ENCODE measurements at regions of chr18 and their contacts with region 1.

Region 1: DNA sequence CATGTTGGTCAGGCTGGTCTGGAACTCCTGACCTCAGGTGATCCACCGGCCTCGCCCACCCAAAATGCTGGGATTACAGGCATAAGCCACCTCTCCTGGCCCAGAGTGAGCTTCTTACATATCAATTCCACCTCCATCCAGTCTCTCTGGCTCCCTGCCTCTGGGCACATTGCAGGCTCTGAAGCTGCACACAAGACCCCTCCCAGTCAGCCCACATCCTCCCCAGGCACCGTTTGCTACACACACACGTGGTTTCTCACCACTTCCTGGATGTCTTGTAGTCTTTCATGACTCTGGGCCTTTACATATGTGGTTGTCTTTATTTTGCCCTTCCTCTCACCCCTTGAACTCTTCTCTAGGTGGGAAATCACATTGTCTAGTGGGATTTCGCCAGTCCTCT is 64.0 kb upstream of the CABLES1 start:
- DNase-seq: peak; percentile 65 to 98 (median 80)
- ATAC-seq: peak; percentile 95
- H3K4me3 ChIP-seq: peak overlapping the region; percentile 27
- H3K4me3 Mint-ChIP-seq: peak overlapping the region; percentile 84
- H3K27ac ChIP-seq: peak overlapping the region; percentile 11 to 23
- H3K27ac Mint-ChIP-seq: peak overlapping the region; percentile 79
- H3K4me1 ChIP-seq: peaks cover 65% of the 10 kb centered on the region
- H3K4me1 Mint-ChIP-seq: peaks cover 82% of the 10 kb centered on the region
- H3K27me3 ChIP-seq: no peaks in the 10 kb centered on the region
- H3K27me3 Mint-ChIP-seq: no peaks in the 10 kb centered on the region
- CTCF ChIP-seq: no peak

Region 2: DNA sequence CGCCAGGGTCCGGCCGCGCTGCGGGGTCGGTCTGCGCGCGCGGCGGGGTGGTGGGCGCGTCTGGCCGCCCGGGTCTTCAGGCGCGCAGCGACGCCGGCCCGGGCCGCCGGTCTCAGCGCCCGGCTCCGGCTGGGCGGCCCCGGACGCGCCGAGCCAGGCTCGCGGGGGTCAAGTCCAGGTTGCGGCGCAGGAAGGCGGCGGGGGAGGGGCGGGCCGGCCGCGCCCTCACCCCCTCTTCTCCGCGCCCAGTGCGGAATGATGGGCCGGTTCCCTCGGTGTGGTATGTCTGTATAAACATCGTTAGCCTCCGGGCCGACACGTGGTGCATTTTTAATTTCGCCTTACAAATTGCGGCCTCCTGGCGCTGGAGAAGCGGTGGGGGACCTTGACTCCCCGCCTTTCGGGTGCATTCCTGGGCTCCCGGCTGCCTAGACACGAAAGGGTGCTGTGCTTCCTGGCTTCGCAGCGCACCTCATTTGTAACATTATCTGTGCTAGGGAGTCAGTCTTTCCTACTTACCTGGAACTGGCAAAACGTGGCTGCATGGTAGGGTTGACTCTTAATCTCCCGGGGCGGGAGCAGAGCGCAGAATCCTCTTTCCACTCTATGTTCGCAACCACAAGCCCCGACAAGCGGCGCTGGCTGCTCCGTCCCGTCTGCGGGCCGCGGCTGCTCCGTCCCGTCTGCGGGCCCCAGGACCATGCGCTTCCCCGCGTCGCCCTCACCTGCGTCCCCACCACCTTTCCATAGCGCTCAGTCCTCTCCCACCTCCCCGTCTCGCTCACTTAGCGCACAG is 722.6 kb before region 1 on chr18:
- CTCF ChIA-PET with region 1: no interaction called
- POLR2A ChIA-PET with region 1: no interaction called
- intact Hi-C with region 1: no loop called
- DNase-seq: peak in 1 of 14 experiments; percentile 20
- ATAC-seq: no peak
- H3K4me3 ChIP-seq: peak overlapping the region; percentile 60
- H3K4me3 Mint-ChIP-seq: peak overlapping the region; percentile 70
- H3K27ac ChIP-seq: peak overlapping the region in 1 of 2 donors; percentile 29
- H3K27ac Mint-ChIP-seq: peak overlapping the region; percentile 44
- H3K4me1 ChIP-seq: peaks cover 18% of the 10 kb centered on the region
- H3K4me1 Mint-ChIP-seq: peaks cover 12% of the 10 kb centered on the region
- H3K27me3 ChIP-seq: peaks cover 19 to 34% of the 10 kb centered on the region in 2 experiments
- H3K27me3 Mint-ChIP-seq: peaks cover 65% of the 10 kb centered on the region
- CTCF ChIP-seq: no peak

Region 3: DNA sequence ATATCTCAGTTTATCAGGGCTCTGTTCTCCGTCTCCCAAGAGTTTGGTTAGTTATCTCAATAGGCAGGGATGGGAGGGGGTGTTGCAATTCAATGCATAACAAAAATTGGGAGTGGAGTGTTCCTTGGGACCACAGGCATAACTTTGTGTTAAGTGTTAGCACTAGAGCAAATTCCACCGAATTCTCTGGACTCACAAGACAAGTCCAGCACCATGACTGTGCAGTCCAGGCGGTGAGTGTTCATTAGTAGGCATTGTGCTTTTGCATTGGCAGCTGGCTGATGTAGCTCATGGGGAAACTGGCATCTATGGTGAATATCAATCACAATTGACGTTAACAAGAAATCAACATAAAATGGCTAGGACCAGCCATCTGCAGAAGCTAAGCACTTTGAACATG is 15.0 kb before region 1 on chr18:
- CTCF ChIA-PET with region 1: no interaction called
- POLR2A ChIA-PET with region 1: interaction called, 10 read pairs
- intact Hi-C with region 1: no loop called
- DNase-seq: no peak
- ATAC-seq: no peak
- H3K4me3 ChIP-seq: no peak overlapping the region
- H3K4me3 Mint-ChIP-seq: no peak overlapping the region
- H3K27ac ChIP-seq: no peak overlapping the region
- H3K27ac Mint-ChIP-seq: no peak overlapping the region
- H3K4me1 ChIP-seq: peaks cover 8% of the 10 kb centered on the region
- H3K4me1 Mint-ChIP-seq: peaks cover 9% of the 10 kb centered on the region
- H3K27me3 ChIP-seq: no peaks in the 10 kb centered on the region
- H3K27me3 Mint-ChIP-seq: no peaks in the 10 kb centered on the region
- CTCF ChIP-seq: no peak

Region 4: DNA sequence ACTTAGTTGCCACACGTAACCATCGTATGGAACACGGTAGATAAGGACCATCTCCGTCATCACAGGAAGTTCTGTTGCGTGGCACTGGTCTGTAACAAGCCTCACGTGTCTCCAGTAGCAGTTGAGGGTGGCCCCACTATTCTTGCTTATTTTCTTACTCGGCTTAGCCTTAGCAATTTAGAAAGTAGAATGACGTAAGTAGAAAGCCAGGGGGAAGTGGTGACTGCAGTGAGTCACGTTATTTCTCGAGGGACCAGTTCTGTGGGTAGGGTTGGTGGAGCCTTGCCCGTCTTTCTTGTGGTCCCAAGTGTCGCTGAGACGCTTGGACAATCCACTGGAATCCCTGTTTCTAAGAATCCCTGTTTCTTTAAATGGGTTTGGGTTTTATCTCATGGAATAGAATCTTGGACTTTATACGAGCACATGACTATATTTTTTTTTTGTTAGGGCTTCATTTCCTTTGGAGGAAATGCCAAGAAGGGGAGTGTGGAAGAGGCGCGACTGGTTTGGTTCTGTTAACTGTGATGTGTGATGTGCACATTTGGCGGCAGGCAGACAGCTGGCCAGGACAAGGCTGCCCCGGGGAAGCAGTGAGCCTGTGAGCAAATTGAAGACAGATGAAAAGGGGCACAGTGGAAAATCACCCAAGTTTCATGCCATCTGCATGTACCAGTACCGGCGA is 160.2 kb after region 1 on chr18:
- CTCF ChIA-PET with region 1: no interaction called
- POLR2A ChIA-PET with region 1: no interaction called
- intact Hi-C with region 1: loop called (anchors 1 to 10 kb)
- DNase-seq: peak; percentile 26 to 93 (median 54)
- ATAC-seq: peak; percentile 88
- H3K4me3 ChIP-seq: no peak overlapping the region
- H3K4me3 Mint-ChIP-seq: peak overlapping the region; percentile 57
- H3K27ac ChIP-seq: peak overlapping the region in 1 of 2 donors; percentile 55
- H3K27ac Mint-ChIP-seq: peak overlapping the region; percentile 84
- H3K4me1 ChIP-seq: peaks cover 25% of the 10 kb centered on the region
- H3K4me1 Mint-ChIP-seq: peaks cover 36% of the 10 kb centered on the region
- H3K27me3 ChIP-seq: no peaks in the 10 kb centered on the region
- H3K27me3 Mint-ChIP-seq: no peaks in the 10 kb centered on the region
- CTCF ChIP-seq: no peak

Region 5: DNA sequence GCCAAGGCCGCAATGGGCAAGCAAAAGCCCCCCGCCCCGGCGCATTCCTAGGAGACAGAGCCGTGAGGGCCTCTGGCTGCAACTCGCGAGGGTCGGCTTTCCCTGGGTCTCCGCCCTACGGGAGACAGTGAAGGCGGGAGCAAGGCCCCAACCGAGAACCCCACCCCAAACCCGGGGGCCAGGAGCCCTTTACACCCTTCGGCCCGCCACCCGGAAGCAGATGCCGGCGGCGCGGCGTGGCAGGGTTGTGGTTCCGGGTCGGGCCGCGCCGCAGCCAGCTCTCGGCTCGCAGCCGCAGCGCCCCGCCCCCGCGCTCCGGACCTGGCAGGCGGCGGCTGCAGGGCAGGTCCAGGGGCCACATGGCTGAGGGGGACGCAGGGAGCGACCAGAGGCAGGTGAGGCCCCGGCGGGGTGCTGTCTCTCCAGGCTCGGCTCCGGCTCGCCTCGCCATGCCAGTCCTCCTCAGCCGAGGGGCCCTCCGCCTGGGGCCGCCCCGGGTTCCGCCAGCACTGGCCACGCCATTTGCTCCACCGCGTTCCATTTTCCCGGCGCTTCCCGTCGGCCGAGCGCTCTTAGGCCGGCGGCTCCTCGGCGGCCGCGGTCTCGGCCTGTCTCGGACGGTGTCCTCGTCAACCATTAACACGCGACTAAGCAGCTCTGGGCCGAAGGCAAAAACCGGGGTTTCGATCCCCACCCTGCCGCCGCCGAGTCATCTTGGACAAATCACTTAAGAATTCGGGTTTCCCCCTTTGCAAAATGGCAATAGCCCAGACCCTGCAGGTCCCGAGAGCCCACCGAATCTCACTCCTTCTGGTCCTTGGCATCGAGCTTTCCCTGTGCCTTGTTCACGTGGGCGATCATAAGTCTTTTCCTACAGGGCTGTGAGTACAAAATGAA is 1355.4 kb after region 1 on chr18 and contains the start of gene IMPACT:
- CTCF ChIA-PET with region 1: no interaction called
- POLR2A ChIA-PET with region 1: no interaction called
- intact Hi-C with region 1: no loop called
- DNase-seq: peak; percentile 52 to 91 (median 74)
- ATAC-seq: peak; percentile 86
- H3K4me3 ChIP-seq: peak within 1 kb of the TSS; percentile 74
- H3K4me3 Mint-ChIP-seq: peak within 1 kb of the TSS; percentile 90
- H3K27ac ChIP-seq: no peak within 1 kb of the TSS
- H3K27ac Mint-ChIP-seq: peak within 1 kb of the TSS; percentile 72
- H3K4me1 ChIP-seq: peaks cover 17% of the 10 kb centered on the region
- H3K4me1 Mint-ChIP-seq: peaks cover 32% of the 10 kb centered on the region
- H3K27me3 ChIP-seq: peaks cover 0 to 12% of the 10 kb centered on the region in 2 experiments
- H3K27me3 Mint-ChIP-seq: peaks cover 30% of the 10 kb centered on the region
- CTCF ChIP-seq: no peak
- total RNA-seq, gene IMPACT: 8.4 to 10.6 TPM